ENCODE measurements at regions of chr11 and their contacts with region 1.

Region 1: GRCh38 chr11:114340311-114341131 is 44.3 kb downstream of the NNMT start:
- ATAC-seq: peak; percentile 33 to 99 (median 70)
- H3K4me3 ChIP-seq: no peak overlapping the region
- H3K27ac ChIP-seq: no peak overlapping the region
- H3K4me1 ChIP-seq: no peaks in the 10 kb centered on the region

Region 2: GRCh38 chr11:114738954-114739353 is 398.4 kb after region 1 on chr11:
- in situ Hi-C with region 1: loop called in 1 of 9 experiments (anchors 25 kb)
- ATAC-seq: peak in 3 of 8 experiments; percentile 46 to 47 (median 46)
- H3K4me3 ChIP-seq: no peak overlapping the region
- H3K27ac ChIP-seq: no peak overlapping the region
- H3K4me1 ChIP-seq: no peaks in the 10 kb centered on the region

Region 3: GRCh38 chr11:114774599-114775361 is 434.3 kb after region 1 on chr11:
- in situ Hi-C with region 1: loop called in 2 of 9 experiments (anchors 25 kb)
- ATAC-seq: peak; percentile 47 to 100 (median 98)
- H3K4me3 ChIP-seq: no peak overlapping the region
- H3K27ac ChIP-seq: no peak overlapping the region
- H3K4me1 ChIP-seq: peaks cover 4 to 6% of the 10 kb centered on the region in 2 donors